Naive thymus-derived CD4-positive, alpha-beta T cell (primary cell): ENCODE measurements at regions of chr15 and their contacts with region 1.

Region 1: DNA sequence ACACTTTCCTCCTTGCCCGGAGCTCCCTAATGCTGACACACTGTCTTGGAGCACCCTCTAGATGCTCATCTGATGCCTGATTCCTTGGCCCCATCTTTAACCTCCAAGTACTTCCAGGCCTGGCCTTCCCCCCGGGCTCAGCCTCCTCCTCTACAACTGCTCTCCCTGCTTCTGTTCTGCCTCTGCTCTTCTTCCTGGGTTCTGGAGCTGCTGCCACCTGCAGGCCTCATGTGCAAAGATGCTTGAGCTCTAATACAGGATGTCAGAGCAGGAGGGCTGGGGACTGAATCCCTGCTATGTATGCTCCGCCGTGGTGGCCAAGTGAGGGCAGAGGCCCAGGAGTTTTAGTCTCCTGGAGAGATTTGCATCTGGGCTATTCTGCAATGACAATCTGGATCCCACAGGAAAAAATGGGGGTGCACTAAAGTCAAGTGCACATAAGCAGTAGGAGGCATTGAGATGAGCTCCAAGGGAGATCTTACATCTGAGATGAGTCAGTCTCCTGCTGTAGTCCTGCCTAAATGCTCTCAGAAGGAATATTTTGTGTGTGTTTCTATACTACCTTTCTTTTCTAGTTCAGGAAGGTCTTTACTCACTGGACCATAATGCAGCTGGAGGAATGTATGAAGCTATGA is 296.3 kb downstream of the UACA start:
- DNase-seq: peak in 6 of 9 donors; percentile 20 to 61 (median 54)
- ATAC-seq: peak; percentile 57
- H3K4me3 ChIP-seq: no peak overlapping the region
- H3K4me3 Mint-ChIP-seq: no peak overlapping the region
- H3K27ac ChIP-seq: no peak overlapping the region
- H3K27ac Mint-ChIP-seq: peak overlapping the region in 1 of 9 donors; percentile 3
- H3K4me1 ChIP-seq: no peaks in the 10 kb centered on the region
- H3K4me1 Mint-ChIP-seq: peaks cover 0 to 13% (median 6%) of the 10 kb centered on the region in 7 donors
- H3K27me3 ChIP-seq: no peaks in the 10 kb centered on the region
- H3K27me3 Mint-ChIP-seq: peaks cover 0 to 81% (median 4%) of the 10 kb centered on the region in 5 donors

Region 2: DNA sequence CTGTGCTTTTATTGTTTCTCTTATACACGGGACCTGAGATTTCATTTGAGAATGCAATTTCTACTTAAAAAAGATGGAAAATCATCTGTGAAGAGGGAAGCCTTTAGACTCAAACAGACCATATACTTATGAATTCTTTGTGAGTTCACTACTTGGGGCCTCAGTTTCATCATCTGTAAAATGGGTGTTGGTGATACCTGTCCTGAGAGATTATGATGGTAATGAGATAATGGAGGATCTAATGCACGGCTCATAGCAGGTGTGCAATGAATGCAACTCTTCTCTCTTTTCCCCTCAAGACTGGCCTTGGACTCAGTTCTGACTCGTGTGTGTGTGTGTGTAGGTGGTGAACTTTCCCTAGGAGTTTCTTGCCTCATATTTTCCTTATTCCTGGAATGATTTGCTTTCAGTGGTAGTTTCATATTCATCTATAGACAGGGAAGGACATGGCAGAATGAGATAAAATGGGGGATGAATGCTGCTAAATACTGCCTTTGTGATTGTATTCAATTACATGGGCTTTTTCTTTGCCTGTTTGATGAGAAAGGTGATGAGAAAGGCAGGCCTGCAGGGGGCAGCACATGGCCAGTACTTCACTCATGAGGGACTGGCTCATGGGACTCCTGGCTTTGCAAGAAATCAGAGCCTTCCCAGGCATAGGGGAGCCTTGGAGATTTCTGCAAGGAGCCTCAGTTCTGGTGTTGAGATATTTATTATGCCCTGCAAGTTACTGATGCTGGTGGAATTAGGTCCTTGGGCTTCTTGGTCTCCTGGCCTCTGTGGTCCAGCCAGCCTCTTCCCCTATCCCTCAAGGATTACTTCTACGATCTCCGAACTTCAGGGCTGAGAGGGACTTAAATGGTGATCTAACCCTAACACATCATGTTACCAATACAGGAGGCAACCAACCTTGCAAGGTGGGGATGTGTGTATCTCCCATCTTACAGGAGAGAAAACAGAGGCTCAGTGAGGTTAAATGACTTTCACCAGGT is 943.7 kb before region 1 on chr15:
- CTCF ChIA-PET with region 1: no interaction called
- POLR2A ChIA-PET with region 1: no interaction called
- intact Hi-C with region 1: loop called (anchors 1 to 2 kb)
- DNase-seq: peak; percentile 17 to 66 (median 40)
- ATAC-seq: peak; percentile 67
- H3K4me3 ChIP-seq: no peak overlapping the region
- H3K4me3 Mint-ChIP-seq: no peak overlapping the region
- H3K27ac ChIP-seq: no peak overlapping the region
- H3K27ac Mint-ChIP-seq: no peak overlapping the region
- H3K4me1 ChIP-seq: no peaks in the 10 kb centered on the region
- H3K4me1 Mint-ChIP-seq: peaks cover 0 to 3% (median 0%) of the 10 kb centered on the region in 7 donors
- H3K27me3 ChIP-seq: no peaks in the 10 kb centered on the region
- H3K27me3 Mint-ChIP-seq: peaks cover 0 to 29% (median 0%) of the 10 kb centered on the region in 5 donors

Region 3: DNA sequence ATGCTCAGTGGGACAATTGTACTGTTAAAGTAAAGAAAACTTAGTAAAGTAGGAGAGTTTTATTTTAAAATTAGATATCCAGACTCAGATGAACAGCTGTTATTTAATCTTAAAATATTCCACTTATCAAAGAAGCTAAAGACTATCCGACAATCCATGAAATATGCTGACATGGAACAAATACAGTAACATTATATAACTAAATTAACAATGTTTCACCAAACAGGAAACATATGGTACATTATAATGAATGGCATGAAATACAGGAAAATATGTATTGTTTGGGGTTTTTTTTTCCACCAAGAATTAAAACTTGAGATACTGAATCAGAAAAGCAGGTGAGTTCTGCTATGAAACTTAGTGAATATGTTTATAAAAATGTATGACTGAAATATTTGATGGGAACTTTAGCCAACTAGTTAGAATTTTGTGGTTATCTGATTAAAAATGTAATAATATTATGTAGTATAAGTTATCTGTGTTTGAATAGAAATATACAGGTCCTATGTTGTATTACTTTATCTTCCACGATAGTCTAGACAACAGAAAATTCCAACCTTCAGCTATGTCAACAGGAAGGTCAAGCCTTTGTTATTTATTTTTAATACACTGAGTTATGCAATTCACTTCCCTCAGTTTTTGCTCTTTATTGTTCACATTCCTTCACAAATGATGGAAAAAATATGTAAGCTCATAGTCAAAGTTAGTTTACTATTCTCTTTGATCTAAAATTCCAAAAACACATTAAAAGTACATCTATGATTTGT is 223.7 kb after region 1 on chr15:
- CTCF ChIA-PET with region 1: no interaction called
- POLR2A ChIA-PET with region 1: no interaction called
- intact Hi-C with region 1: no loop called
- DNase-seq: no peak
- ATAC-seq: no peak
- H3K4me3 ChIP-seq: no peak overlapping the region
- H3K4me3 Mint-ChIP-seq: no peak overlapping the region
- H3K27ac ChIP-seq: no peak overlapping the region
- H3K27ac Mint-ChIP-seq: no peak overlapping the region
- H3K4me1 ChIP-seq: no peaks in the 10 kb centered on the region
- H3K4me1 Mint-ChIP-seq: peaks cover 0 to 3% (median 0%) of the 10 kb centered on the region in 7 donors
- H3K27me3 ChIP-seq: no peaks in the 10 kb centered on the region
- H3K27me3 Mint-ChIP-seq: peaks cover 0 to 43% (median 8%) of the 10 kb centered on the region in 5 donors